Activated CD4-positive, alpha-beta T cell treated with anti-CD3 and anti-CD28 coated beads for 36 hours (primary cell): ENCODE measurements at regions of chr7 and their contacts with region 1.

Region 1: GRCh38 chr7:55086413-55087201 is 67.8 kb downstream of the EGFR start:
- DNase-seq: peak; percentile 45
- ATAC-seq: peak; percentile 79
- H3K4me3 Mint-ChIP-seq: no peak overlapping the region
- H3K27ac Mint-ChIP-seq: peak overlapping the region; percentile 29
- H3K4me1 Mint-ChIP-seq: peaks cover 15% of the 10 kb centered on the region
- H3K27me3 Mint-ChIP-seq: peaks cover 24% of the 10 kb centered on the region

Region 2: DNA sequence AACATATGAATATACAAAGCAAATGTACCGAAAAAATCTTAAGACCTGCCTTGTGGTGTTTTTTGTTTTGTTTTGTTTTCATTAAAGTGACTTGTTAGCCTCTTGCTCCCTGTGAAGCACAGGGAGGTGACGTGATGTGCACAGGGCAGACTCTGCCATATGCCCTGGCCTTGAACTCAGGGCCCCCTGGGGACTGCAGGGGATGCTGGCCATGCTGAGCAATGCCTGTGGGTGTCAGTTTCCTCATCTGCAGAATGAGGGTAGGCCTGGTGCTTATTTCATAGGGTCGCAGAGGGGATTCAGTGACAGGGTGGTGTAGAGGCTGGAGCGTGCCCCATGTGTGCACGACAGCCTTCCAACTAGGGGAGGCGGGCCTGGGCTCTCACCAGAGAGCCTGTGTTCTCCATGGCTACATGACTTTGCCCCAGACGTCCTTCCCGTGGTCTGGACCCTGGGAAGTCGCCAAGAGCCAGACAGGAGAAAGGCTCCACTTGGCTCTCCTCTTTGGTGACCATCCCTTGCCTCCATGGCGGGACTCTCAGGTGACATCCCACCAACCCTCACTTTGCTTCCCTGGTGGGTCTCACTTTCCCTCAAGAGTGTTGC is 53.3 kb before region 1 on chr7:
- CTCF ChIA-PET with region 1: no interaction called
- POLR2A ChIA-PET with region 1: no interaction called
- intact Hi-C with region 1: no loop called
- DNase-seq: no peak
- ATAC-seq: no peak
- H3K4me3 Mint-ChIP-seq: no peak overlapping the region
- H3K27ac Mint-ChIP-seq: no peak overlapping the region
- H3K4me1 Mint-ChIP-seq: no peaks in the 10 kb centered on the region
- H3K27me3 Mint-ChIP-seq: peaks cover 14% of the 10 kb centered on the region

Region 3: GRCh38 chr7:55067748-55068147 is 18.9 kb before region 1 on chr7:
- CTCF ChIA-PET with region 1: no interaction called
- POLR2A ChIA-PET with region 1: no interaction called
- intact Hi-C with region 1: loop called in 1 of 2 experiments (anchors 1 kb)
- DNase-seq: no peak
- ATAC-seq: no peak
- H3K4me3 Mint-ChIP-seq: no peak overlapping the region
- H3K27ac Mint-ChIP-seq: no peak overlapping the region
- H3K4me1 Mint-ChIP-seq: peaks cover 5% of the 10 kb centered on the region
- H3K27me3 Mint-ChIP-seq: peaks cover 29% of the 10 kb centered on the region

Region 4: GRCh38 chr7:55073945-55074499 is 12.6 kb before region 1 on chr7:
- CTCF ChIA-PET with region 1: interaction called, 6 read pairs
- POLR2A ChIA-PET with region 1: no interaction called
- intact Hi-C with region 1: loop called (anchors 1 to 2 kb)
- DNase-seq: peak; percentile 50
- ATAC-seq: peak; percentile 77
- H3K4me3 Mint-ChIP-seq: no peak overlapping the region
- H3K27ac Mint-ChIP-seq: peak overlapping the region; percentile 33
- H3K4me1 Mint-ChIP-seq: peaks cover 18% of the 10 kb centered on the region
- H3K27me3 Mint-ChIP-seq: peaks cover 8% of the 10 kb centered on the region

Region 5: GRCh38 chr7:55235115-55235514 is 148.5 kb after region 1 on chr7:
- CTCF ChIA-PET with region 1: no interaction called
- POLR2A ChIA-PET with region 1: no interaction called
- intact Hi-C with region 1: no loop called
- DNase-seq: no peak
- ATAC-seq: no peak
- H3K4me3 Mint-ChIP-seq: no peak overlapping the region
- H3K27ac Mint-ChIP-seq: no peak overlapping the region
- H3K4me1 Mint-ChIP-seq: no peaks in the 10 kb centered on the region
- H3K27me3 Mint-ChIP-seq: peaks cover 17% of the 10 kb centered on the region